Caco-2 (cell line): ENCODE measurements at regions of chr6 and their contacts with region 1.

Region 1: DNA sequence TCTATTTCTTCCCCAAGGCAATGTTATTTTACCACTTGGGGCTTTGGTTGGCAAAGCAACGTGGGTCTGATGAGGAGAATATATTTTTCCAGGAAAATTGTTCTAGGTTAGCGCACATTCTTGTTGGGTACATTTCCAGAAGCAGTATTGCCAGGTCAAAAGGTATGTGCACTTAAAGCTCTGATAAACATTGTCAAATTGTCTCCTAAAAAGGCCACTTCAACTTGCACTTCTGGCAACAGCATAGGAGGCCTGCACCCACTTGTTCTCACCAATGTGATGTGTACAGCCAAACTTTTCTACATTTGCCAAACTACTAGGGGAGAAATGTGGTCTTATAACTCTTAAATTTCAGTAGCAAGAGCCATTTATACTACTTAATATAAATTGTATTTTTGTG is 197.5 kb upstream of the COL21A1 start:
- DNase-seq: no peak
- H3K4me3 ChIP-seq: no peak overlapping the region
- H3K4me3 Mint-ChIP-seq: no peak overlapping the region
- H3K27ac Mint-ChIP-seq: no peak overlapping the region
- H3K4me1 ChIP-seq: no peaks in the 10 kb centered on the region; the same call in 1 of the 2 replicates
- H3K4me1 Mint-ChIP-seq: no peaks in the 10 kb centered on the region
- H3K27me3 ChIP-seq: no peaks in the 10 kb centered on the region
- H3K27me3 Mint-ChIP-seq: no peaks in the 10 kb centered on the region
- CTCF ChIP-seq: no peak

Region 2: DNA sequence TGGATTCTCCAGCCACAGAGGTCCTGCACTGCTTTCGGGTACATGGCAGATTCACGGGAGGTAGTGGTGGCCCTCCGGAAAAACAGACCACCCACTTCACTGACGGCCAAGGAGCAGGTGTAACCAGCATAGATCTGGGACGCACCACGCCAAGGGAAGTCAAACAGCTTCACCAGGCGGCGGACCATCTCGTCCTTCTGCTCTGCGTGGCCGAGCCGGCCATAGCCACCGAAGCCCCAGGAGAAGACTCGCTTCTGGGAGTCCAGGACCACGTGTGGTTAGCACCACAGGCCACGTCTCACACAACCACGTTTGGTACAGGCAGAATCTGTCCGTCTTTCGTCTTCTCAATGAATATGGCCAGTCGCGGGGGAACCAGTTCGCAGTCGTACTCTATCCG is 12.7 kb before region 1 on chr6:
- CTCF ChIA-PET with region 1: no interaction called
- POLR2A ChIA-PET with region 1: interaction called, 11 read pairs
- intact Hi-C with region 1: no loop called
- DNase-seq: no peak
- H3K4me3 ChIP-seq: no peak overlapping the region
- H3K4me3 Mint-ChIP-seq: no peak overlapping the region
- H3K27ac Mint-ChIP-seq: no peak overlapping the region
- H3K4me1 ChIP-seq: no peaks in the 10 kb centered on the region
- H3K4me1 Mint-ChIP-seq: no peaks in the 10 kb centered on the region
- H3K27me3 ChIP-seq: no peaks in the 10 kb centered on the region
- H3K27me3 Mint-ChIP-seq: no peaks in the 10 kb centered on the region
- CTCF ChIP-seq: no peak